Natural killer cell (primary cell): ENCODE measurements at regions of chr12 and their contacts with region 1.

Region 1: DNA sequence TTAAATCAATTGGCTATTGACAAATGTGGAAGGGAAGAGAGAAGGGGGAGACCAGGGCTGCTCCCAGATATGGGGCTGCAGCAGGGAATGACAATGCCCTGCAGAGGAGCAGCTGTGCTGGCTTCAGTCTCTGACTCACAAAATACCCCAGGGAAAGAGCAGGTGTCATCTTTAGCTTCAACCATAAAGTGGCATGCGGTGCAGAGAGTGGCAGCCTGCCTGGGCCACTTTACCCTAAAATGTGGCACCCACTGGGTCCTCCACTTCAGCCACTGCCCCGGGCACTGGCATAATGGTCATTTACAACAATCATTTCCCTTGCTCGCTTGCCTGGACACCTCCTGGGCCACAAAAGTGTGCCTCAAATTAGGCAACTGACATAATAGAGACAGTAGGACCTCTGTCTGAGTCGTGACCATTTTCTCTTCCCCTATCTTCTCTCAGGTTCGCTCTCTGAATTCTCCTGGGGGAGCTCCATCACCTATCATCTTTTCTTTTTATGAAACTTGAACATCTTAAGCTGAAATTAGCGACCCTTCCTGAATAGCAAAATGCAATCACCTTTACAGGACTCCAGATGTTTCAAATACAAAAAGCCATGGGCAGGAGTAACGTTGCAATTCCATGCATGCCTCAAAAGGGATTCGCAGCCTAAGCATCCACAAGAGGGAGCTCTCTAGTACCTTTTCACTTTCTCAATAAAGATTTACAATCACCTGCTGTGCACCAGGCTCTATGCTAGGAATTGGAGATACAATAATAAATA is 179.9 kb upstream of the ATF7IP start:
- DNase-seq: peak in 1 of 2 donors; percentile 58
- ATAC-seq: peak in 1 of 3 donors; percentile 50
- H3K4me3 ChIP-seq: no peak overlapping the region
- H3K4me3 Mint-ChIP-seq: no peak overlapping the region
- H3K27ac ChIP-seq: no peak overlapping the region
- H3K27ac Mint-ChIP-seq: no peak overlapping the region
- H3K4me1 ChIP-seq: no peaks in the 10 kb centered on the region
- H3K4me1 Mint-ChIP-seq: peaks cover 0 to 4% of the 10 kb centered on the region in 2 donors
- H3K27me3 ChIP-seq: no peaks in the 10 kb centered on the region
- H3K27me3 Mint-ChIP-seq: peaks cover 13 to 24% of the 10 kb centered on the region in 2 donors
- CTCF ChIP-seq: peak; percentile 61

Region 2: GRCh38 chr12:14157088-14157747 is 28.4 kb before region 1 on chr12:
- intact Hi-C with region 1: no loop called
- DNase-seq: no peak
- ATAC-seq: no peak
- H3K4me3 ChIP-seq: no peak overlapping the region
- H3K4me3 Mint-ChIP-seq: no peak overlapping the region
- H3K27ac ChIP-seq: peak overlapping the region; percentile 72
- H3K27ac Mint-ChIP-seq: no peak overlapping the region
- H3K4me1 ChIP-seq: peaks cover 6% of the 10 kb centered on the region
- H3K4me1 Mint-ChIP-seq: no peaks in the 10 kb centered on the region
- H3K27me3 ChIP-seq: no peaks in the 10 kb centered on the region
- H3K27me3 Mint-ChIP-seq: peaks cover 0 to 4% of the 10 kb centered on the region in 2 donors
- CTCF ChIP-seq: no peak

Region 3: DNA sequence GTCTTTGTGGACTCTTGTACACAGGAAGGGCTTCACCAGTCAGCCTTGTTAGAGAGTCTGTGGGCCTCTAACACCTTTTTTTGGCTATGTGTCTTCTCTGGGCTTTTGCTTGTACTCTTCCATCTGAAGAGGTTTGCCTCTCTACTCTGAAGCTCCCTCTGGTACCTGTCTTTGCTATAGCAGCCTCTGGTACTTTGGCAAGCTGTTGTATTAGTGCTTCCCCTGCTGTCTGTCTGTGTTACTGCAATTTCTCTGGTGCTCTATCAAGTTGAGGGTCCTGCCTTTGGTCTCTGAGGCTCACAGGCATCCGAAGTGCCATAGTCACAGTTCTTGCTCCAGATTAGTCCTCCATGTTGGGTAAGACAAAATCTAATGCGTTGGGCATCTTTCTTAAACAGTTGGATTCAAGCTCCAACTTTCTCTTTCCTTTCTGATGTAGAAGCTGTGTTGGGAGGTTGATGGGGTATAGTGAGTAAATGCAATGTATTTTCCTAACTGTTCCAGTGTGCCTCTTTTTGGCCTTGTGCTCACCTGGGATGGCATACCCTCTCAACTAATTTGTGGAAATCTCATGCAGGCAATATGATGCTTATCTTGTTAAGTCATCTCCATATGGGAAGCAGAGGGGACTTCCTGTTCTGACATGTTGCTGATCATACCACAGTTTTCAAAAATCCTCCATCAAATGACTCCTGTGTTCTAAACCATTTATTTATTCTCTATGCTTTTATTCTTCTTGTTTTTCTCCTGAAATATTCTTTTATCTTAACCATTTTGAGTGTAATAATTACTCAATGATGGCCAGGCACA is 268.7 kb after region 1 on chr12:
- intact Hi-C with region 1: loop called (anchors 1 kb)
- DNase-seq: peak in 1 of 2 donors; percentile 63
- ATAC-seq: peak; percentile 80 to 98 (median 96)
- H3K4me3 ChIP-seq: no peak overlapping the region
- H3K4me3 Mint-ChIP-seq: peak overlapping the region; percentile 18
- H3K27ac ChIP-seq: peak overlapping the region; percentile 6
- H3K27ac Mint-ChIP-seq: peak overlapping the region; percentile 72 to 82
- H3K4me1 ChIP-seq: peaks cover 9% of the 10 kb centered on the region
- H3K4me1 Mint-ChIP-seq: peaks cover 44 to 46% of the 10 kb centered on the region in 2 donors
- H3K27me3 ChIP-seq: no peaks in the 10 kb centered on the region
- H3K27me3 Mint-ChIP-seq: no peaks in the 10 kb centered on the region
- CTCF ChIP-seq: peak; percentile 63